HepG2 (cell line): ENCODE measurements at regions of chr1 and their contacts with region 1.

Region 1: GRCh38 chr1:201559679-201560162 is 20.8 kb downstream of the NAV1 start:
- DNase-seq: peak; percentile 40
- ATAC-seq: peak; percentile 97
- H3K4me3 ChIP-seq: no peak overlapping the region
- H3K27ac ChIP-seq: no peak overlapping the region
- H3K4me1 ChIP-seq: no peaks in the 10 kb centered on the region
- H3K27me3 ChIP-seq: peaks cover 5 to 45% of the 10 kb centered on the region in 2 experiments; a peak in 3 of 5 replicates
- CTCF ChIP-seq: peak; percentile 96
- EP300 ChIP-seq: no peak
- POLR2A ChIP-seq: no peak
- RAD21 ChIP-seq: peak; percentile 90

Region 2: DNA sequence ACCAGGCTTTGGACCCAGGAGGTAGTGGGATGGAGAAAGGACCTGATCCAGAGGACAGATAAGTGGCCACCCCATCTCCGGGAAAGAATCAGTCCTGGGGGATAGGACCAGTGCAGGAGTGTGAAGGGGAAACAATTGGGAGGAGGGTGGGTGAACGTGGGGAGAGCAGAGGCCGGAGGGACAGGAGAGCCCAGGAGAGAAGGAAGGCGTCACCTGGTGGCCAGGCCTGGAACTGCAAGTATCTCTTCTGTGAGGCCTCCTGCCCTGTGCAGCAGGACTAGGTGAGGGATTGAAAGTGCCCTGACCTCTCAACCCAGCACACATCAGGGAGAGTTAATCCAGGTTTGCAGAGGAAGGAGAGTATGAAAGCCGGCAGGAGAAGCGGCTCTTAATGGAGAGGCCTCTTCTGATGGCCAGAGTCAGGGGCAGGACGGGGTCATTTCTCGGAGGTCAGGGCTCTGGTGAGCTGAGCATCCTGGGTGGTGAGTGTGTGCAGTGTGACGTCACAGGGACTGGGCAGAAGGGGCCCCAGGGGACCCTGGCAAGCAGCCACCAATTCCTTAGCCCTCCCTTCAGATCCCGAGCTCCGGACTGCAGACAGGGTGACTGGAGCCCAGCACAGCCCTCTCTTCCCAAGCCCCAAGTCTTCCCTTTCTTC is 151.4 kb before region 1 on chr1:
- CTCF ChIA-PET with region 1: no interaction called
- POLR2A ChIA-PET with region 1: no interaction called
- in situ Hi-C with region 1: no loop called
- intact Hi-C with region 1: no loop called
- DNase-seq: peak; percentile 67
- ATAC-seq: peak; percentile 76
- H3K4me3 ChIP-seq: no peak overlapping the region
- H3K27ac ChIP-seq: no peak overlapping the region
- H3K4me1 ChIP-seq: peaks cover 55% of the 10 kb centered on the region
- H3K27me3 ChIP-seq: peaks cover 1 to 9% of the 10 kb centered on the region in 2 experiments; a peak in 1 of 5 replicates
- CTCF ChIP-seq: peak; percentile 98
- EP300 ChIP-seq: no peak
- POLR2A ChIP-seq: no peak
- RAD21 ChIP-seq: peak; percentile 82

Region 3: GRCh38 chr1:201703621-201704439 is 144.1 kb after region 1 on chr1:
- CTCF ChIA-PET with region 1: interaction called, 28 read pairs
- POLR2A ChIA-PET with region 1: no interaction called
- in situ Hi-C with region 1: loop called (anchors 5 kb)
- intact Hi-C with region 1: loop called (anchors 1 kb)
- DNase-seq: peak; percentile 37
- ATAC-seq: peak; percentile 99
- H3K4me3 ChIP-seq: no peak overlapping the region
- H3K27ac ChIP-seq: no peak overlapping the region
- H3K4me1 ChIP-seq: peaks cover 4% of the 10 kb centered on the region; the same call in 1 of the 2 replicates
- H3K27me3 ChIP-seq: peaks cover 4 to 11% of the 10 kb centered on the region in 2 experiments; a peak in 2 of 5 replicates
- CTCF ChIP-seq: peak; percentile 95
- EP300 ChIP-seq: no peak
- POLR2A ChIP-seq: no peak
- RAD21 ChIP-seq: peak; percentile 89

Region 4: DNA sequence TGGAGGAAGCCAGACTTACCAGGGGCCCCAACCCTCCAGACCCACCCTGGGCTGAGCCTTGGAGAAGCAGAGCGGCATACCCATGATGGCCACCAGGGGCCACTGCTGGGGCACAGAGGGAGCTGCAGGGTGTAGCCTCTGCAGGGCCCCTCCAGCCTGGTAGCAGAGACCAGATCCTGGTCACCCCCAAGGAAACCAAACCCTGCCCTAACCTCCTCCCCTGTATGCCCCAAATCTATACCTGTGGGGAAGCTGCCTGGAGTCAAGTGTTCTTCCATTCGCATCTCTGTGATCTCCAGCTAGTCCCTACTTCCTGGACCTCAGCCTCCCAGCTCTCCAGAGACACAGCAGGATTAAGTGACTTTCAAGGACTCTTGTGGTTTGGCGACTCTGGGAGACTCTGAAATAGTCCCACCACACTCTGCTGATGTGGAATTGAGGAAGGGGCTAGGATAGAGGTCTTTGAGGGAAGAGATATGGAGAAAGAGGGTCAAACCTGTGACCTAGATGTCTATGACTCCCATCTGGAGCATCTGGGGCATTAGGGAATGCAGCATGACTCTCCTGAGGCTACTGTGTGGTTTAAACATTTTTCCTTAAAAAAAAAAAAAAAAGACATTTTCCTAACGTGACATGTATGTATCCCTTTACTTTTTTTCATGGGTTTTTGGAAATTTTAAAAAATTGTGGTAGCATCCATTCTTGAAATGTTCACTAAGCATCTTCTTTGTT is 150.0 kb after region 1 on chr1:
- CTCF ChIA-PET with region 1: interaction called, 28 read pairs
- POLR2A ChIA-PET with region 1: no interaction called
- in situ Hi-C with region 1: loop called (anchors 5 kb)
- intact Hi-C with region 1: loop called (anchors 1 kb)
- DNase-seq: peak; percentile 24
- ATAC-seq: peak; percentile 99
- H3K4me3 ChIP-seq: no peak overlapping the region
- H3K27ac ChIP-seq: no peak overlapping the region
- H3K4me1 ChIP-seq: no peaks in the 10 kb centered on the region
- H3K27me3 ChIP-seq: no peaks in the 10 kb centered on the region; a peak in 1 of 5 replicates
- CTCF ChIP-seq: peak; percentile 90
- EP300 ChIP-seq: no peak
- POLR2A ChIP-seq: no peak
- RAD21 ChIP-seq: peak; percentile 68; the same call in 1 of the 2 replicates

Region 5: DNA sequence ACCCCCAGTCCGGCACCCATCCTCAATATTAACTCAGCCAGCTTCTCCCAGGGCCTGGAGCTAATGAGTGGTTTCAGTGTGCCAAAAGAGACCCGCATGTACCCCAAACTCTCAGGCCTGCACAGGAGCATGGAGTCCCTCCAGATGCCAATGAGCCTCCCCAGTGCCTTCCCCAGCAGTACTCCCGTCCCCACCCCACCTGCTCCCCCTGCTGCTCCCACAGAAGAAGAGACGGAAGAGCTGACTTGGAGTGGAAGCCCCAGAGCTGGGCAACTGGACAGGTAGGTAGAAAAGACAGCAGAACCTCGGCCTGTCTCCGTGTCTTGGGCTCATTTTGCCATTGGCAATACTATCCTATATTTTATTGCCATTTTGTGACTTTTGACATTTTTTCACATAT is 223.9 kb after region 1 on chr1:
- CTCF ChIA-PET with region 1: no interaction called
- POLR2A ChIA-PET with region 1: no interaction called
- in situ Hi-C with region 1: loop called (anchors 10 kb)
- intact Hi-C with region 1: no loop called
- DNase-seq: no peak
- ATAC-seq: no peak
- H3K4me3 ChIP-seq: no peak overlapping the region
- H3K27ac ChIP-seq: no peak overlapping the region
- H3K4me1 ChIP-seq: no peaks in the 10 kb centered on the region
- H3K27me3 ChIP-seq: peaks cover 0 to 48% of the 10 kb centered on the region in 2 experiments; a peak in 3 of 5 replicates
- CTCF ChIP-seq: no peak
- EP300 ChIP-seq: no peak
- POLR2A ChIP-seq: no peak
- RAD21 ChIP-seq: no peak

Region 6: GRCh38 chr1:201792534-201793305 is 233.0 kb after region 1 on chr1:
- CTCF ChIA-PET with region 1: interaction called, 7 read pairs
- POLR2A ChIA-PET with region 1: no interaction called
- in situ Hi-C with region 1: loop called (anchors 10 kb)
- intact Hi-C with region 1: loop called (anchors 1 kb)
- DNase-seq: peak; percentile 56
- ATAC-seq: peak; percentile 95
- H3K4me3 ChIP-seq: no peak overlapping the region
- H3K27ac ChIP-seq: no peak overlapping the region
- H3K4me1 ChIP-seq: no peaks in the 10 kb centered on the region
- H3K27me3 ChIP-seq: peaks cover 2 to 28% of the 10 kb centered on the region in 2 experiments; a peak in 4 of 5 replicates
- CTCF ChIP-seq: peak; percentile 95
- EP300 ChIP-seq: no peak
- POLR2A ChIP-seq: no peak
- RAD21 ChIP-seq: peak; percentile 55; the same call in 1 of the 2 replicates